Ovary (tissue), 10 donors: ENCODE measurements at regions of chr6 and their contacts with region 1.

Region 1: DNA sequence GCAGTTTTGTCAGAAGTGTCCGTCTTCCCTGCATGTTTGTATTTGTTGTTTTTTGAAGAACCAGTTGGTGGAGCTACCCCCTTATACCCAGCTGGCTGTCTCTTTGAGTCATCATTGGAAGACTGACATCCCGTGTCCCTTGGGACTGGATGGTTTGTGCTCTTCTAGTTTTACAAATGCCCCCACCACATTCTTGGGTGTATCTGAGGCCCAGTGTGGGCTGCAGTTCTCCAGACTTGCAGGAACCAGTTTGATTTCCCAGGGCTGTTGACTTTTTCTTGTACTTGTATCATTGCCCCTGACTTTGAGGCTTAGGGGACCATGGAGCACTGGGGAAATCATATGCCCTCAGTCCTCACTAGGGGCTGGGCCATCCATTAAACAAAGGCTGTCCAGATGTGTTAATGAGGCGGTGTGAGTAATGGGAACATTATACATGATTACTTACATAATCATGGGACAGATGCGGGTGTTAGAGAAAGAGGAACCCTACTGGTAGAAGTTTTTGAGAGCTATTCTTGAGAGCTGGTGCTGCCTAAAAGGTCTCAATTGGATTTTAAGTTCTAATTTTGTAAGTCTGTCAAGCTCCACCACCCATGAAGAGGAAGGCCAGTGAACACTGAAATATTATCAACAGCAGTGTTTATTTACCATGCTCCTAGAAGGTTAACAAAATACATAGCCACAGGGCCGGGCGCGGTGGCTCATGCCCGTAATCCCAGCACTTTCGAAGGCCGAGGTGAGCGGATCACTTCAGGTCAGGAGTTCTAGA is 8.4 kb downstream of the JARID2 start:
- DNase-seq: no peak
- H3K4me3 ChIP-seq: no peak overlapping the region
- H3K27ac ChIP-seq: no peak overlapping the region
- H3K4me1 ChIP-seq: peaks cover 9% of the 10 kb centered on the region
- H3K27me3 ChIP-seq: no peaks in the 10 kb centered on the region
- CTCF ChIP-seq: no peak
- EP300 ChIP-seq: no peak
- POLR2A ChIP-seq: no peak

Region 2: GRCh38 chr6:14488180-14488579 is 766.1 kb before region 1 on chr6:
- intact Hi-C with region 1: no loop called
- DNase-seq: no peak
- H3K4me3 ChIP-seq: no peak overlapping the region
- H3K27ac ChIP-seq: no peak overlapping the region
- H3K4me1 ChIP-seq: no peaks in the 10 kb centered on the region
- H3K27me3 ChIP-seq: no peaks in the 10 kb centered on the region
- CTCF ChIP-seq: no peak
- EP300 ChIP-seq: no peak
- POLR2A ChIP-seq: no peak

Region 3: GRCh38 chr6:15504581-15505350 is 250.5 kb after region 1 on chr6:
- intact Hi-C with region 1: loop called in 2 of 4 experiments (anchors 10 kb)
- DNase-seq: peak; percentile 79 to 86 (median 83)
- H3K4me3 ChIP-seq: peak overlapping the region; percentile 29
- H3K27ac ChIP-seq: peak overlapping the region; percentile 0 to 58
- H3K4me1 ChIP-seq: peaks cover 19% of the 10 kb centered on the region
- H3K27me3 ChIP-seq: no peaks in the 10 kb centered on the region
- CTCF ChIP-seq: no peak
- EP300 ChIP-seq: no peak
- POLR2A ChIP-seq: no peak